Ascending aorta (tissue), 2 donors: ENCODE measurements at regions of chr11 and their contacts with region 1.

Region 1: GRCh38 chr11:10646005-10646404 is 47.5 kb downstream of the IRAG1 start:
- DNase-seq: no peak
- H3K4me3 ChIP-seq: no peak overlapping the region
- H3K27ac ChIP-seq: peak overlapping the region; percentile 88 to 93
- H3K4me1 ChIP-seq: peaks cover 19 to 57% of the 10 kb centered on the region in 2 donors
- H3K27me3 ChIP-seq: no peaks in the 10 kb centered on the region
- CTCF ChIP-seq: no peak

Region 2: DNA sequence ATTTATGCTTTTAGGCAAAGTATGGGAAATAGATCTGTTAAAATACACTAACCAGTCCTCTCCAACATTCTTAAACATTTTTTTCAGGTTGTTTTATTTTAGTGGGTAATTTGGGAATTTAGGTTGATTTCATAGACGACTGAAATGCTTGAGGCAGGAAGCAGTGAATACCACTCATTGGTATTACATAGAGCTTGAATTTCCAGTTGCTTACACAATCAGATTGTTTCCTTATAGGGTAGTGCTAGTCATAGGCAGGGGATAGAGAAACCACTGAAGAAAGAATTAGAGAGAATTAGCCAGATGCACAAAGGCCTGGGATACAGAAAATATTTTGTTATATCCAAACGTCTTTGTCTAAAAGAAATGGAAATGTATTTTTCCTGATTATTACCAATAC is 53.7 kb before region 1 on chr11:
- intact Hi-C with region 1: no loop called
- DNase-seq: no peak
- H3K4me3 ChIP-seq: no peak overlapping the region
- H3K27ac ChIP-seq: peak overlapping the region; percentile 93 to 95
- H3K4me1 ChIP-seq: peaks cover 21 to 34% of the 10 kb centered on the region in 2 donors
- H3K27me3 ChIP-seq: no peaks in the 10 kb centered on the region
- CTCF ChIP-seq: no peak

Region 3: GRCh38 chr11:10631426-10632160 is 14.4 kb before region 1 on chr11:
- intact Hi-C with region 1: loop called (anchors 2 kb)
- DNase-seq: no peak
- H3K4me3 ChIP-seq: no peak overlapping the region
- H3K27ac ChIP-seq: peak overlapping the region; percentile 74 to 82
- H3K4me1 ChIP-seq: peaks cover 3 to 4% of the 10 kb centered on the region in 2 donors
- H3K27me3 ChIP-seq: no peaks in the 10 kb centered on the region
- CTCF ChIP-seq: no peak

Region 4: GRCh38 chr11:11400635-11401232 is 754.7 kb after region 1 on chr11:
- intact Hi-C with region 1: no loop called
- DNase-seq: no peak
- H3K4me3 ChIP-seq: no peak overlapping the region
- H3K27ac ChIP-seq: no peak overlapping the region
- H3K4me1 ChIP-seq: peaks cover 5 to 20% of the 10 kb centered on the region in 2 donors
- H3K27me3 ChIP-seq: no peaks in the 10 kb centered on the region
- CTCF ChIP-seq: no peak